Activated CD8-positive, alpha-beta T cell treated with anti-CD3 and anti-CD28 coated beads for 36 hours (primary cell): ENCODE measurements at regions of chr10 and their contacts with region 1.

Region 1: GRCh38 chr10:69515699-69516259 is 57.4 kb downstream of the NEUROG3 start:
- DNase-seq: peak; percentile 89
- ATAC-seq: peak; percentile 97
- H3K4me3 Mint-ChIP-seq: no peak overlapping the region
- H3K27ac Mint-ChIP-seq: no peak overlapping the region
- H3K4me1 Mint-ChIP-seq: no peaks in the 10 kb centered on the region
- H3K27me3 Mint-ChIP-seq: peaks cover 8% of the 10 kb centered on the region
- CTCF ChIP-seq: peak; percentile 79

Region 2: GRCh38 chr10:69449841-69450240 is 65.9 kb before region 1 on chr10:
- CTCF ChIA-PET with region 1: interaction called, 11 read pairs
- POLR2A ChIA-PET with region 1: no interaction called
- intact Hi-C with region 1: no loop called
- DNase-seq: peak; percentile 68
- ATAC-seq: peak; percentile 66
- H3K4me3 Mint-ChIP-seq: no peak overlapping the region
- H3K27ac Mint-ChIP-seq: no peak overlapping the region
- H3K4me1 Mint-ChIP-seq: peaks cover 9% of the 10 kb centered on the region
- H3K27me3 Mint-ChIP-seq: peaks cover 2% of the 10 kb centered on the region
- CTCF ChIP-seq: peak; percentile 51

Region 3: GRCh38 chr10:69527961-69528360 is 12.2 kb after region 1 on chr10:
- CTCF ChIA-PET with region 1: interaction called, 23 read pairs
- POLR2A ChIA-PET with region 1: no interaction called
- intact Hi-C with region 1: no loop called
- DNase-seq: no peak
- ATAC-seq: no peak
- H3K4me3 Mint-ChIP-seq: no peak overlapping the region
- H3K27ac Mint-ChIP-seq: no peak overlapping the region
- H3K4me1 Mint-ChIP-seq: no peaks in the 10 kb centered on the region
- H3K27me3 Mint-ChIP-seq: peaks cover 9% of the 10 kb centered on the region
- CTCF ChIP-seq: no peak

Region 4: DNA sequence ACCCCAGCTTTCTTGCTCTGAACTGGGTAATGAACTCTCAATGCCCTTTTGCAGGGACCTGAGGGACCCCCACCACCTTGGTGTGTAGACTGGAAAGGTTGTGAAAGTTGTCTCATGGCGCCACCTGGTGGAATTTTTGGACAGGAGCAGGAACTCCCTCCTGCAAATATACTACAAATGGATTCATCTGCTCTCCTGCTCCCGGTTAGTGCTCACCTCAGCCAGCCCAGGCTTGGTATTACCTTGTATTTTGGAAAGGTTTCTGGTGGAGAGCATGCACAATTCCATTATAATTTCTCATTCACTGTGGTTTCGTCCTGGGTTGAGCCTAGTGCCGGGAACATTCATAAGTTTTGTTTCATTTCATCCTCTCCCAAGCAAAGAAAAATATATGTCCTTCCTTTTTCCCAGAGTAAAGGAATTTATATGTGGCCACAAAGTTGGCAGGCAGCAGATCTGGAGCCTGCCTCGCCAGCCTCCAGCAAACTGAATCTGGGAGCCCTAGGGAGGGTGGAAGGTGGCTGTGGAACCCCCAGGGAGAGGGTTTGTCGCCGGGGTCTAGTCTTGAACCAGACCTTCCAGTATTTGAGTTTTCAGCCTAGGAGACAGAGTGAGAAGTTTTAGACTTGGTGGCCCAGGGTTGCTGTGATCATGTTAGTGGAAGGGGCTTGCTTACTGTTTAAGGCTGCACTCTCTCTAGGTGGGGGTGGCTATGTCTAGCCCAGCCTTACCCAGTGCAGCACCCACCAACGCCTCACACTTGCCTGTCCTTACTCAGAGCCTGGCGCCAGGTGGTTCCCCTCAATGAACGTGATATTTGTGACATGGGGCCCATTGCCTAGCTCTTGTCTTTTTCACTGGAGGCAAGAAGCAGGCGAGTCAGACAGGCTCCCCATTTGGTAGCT is 123.8 kb after region 1 on chr10:
- CTCF ChIA-PET with region 1: interaction called, 397 read pairs
- POLR2A ChIA-PET with region 1: interaction called, 3 read pairs
- intact Hi-C with region 1: loop called (anchors 1 kb)
- DNase-seq: peak; percentile 80
- ATAC-seq: peak; percentile 75
- H3K4me3 Mint-ChIP-seq: no peak overlapping the region
- H3K27ac Mint-ChIP-seq: no peak overlapping the region
- H3K4me1 Mint-ChIP-seq: no peaks in the 10 kb centered on the region
- H3K27me3 Mint-ChIP-seq: no peaks in the 10 kb centered on the region
- CTCF ChIP-seq: peak; percentile 88

Region 5: DNA sequence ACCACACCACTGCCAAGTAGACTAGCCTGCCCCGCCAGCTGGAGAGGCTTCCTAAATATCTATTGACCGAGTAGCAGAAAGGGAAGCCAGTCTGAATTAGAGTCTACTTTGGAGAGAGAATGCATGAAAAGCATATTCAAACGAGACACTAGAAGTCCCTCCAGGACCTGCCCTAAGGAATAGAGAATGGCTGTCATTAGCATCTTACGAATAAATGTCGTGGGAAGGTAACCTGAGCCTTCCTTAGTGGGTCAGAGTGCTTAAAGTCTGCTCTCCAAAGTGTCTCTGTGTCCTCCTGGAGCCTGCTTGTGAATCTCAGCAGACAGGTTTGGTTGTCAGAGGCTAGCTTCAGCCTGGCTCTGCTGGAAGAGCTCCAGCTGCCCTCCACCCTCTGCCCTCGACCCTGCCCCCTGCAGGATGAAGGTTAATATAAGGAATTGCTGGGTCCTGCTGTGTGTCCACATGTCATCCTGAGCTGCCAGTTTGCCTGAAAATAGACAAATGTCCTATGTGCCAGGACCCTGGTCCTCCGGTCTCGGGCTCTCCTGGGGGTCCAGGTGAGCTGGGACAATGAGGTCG is 147.7 kb after region 1 on chr10:
- CTCF ChIA-PET with region 1: interaction called, 12 read pairs
- POLR2A ChIA-PET with region 1: no interaction called
- intact Hi-C with region 1: no loop called
- DNase-seq: peak; percentile 10
- ATAC-seq: no peak
- H3K4me3 Mint-ChIP-seq: no peak overlapping the region
- H3K27ac Mint-ChIP-seq: no peak overlapping the region
- H3K4me1 Mint-ChIP-seq: no peaks in the 10 kb centered on the region
- H3K27me3 Mint-ChIP-seq: peaks cover 10% of the 10 kb centered on the region
- CTCF ChIP-seq: no peak

Region 6: DNA sequence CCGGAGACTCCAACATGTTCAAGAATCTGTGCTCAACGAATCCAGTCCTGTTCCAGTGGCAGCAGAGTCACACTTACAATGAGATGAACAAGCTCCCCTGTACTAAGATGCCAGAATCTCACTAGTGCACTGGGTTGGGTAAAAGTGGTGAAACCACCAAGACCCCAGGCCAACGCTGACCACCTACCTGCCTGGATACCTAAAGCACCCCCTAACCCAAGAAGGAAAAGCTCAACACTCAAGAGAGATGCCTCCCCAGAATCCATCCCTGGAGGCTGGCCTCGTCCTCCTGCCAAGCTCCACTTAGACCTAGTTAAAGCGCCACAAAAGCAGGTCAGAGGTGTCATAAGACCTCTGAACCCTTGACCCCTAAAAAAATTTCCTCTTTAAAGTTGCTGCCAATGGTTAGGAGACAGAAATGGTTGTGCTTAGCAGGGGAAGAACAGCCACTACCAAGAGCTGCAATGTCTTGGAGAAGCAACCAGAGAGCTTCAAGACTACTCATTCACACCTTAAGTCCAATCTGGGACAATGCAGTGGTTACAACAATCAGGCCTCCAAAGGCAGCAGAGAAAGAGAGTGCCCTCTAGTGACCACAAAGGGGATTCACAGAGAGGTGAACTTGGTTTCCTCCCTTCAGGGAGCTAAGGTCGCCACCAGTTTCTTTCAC is 442.2 kb after region 1 on chr10:
- CTCF ChIA-PET with region 1: interaction called, 11 read pairs
- POLR2A ChIA-PET with region 1: no interaction called
- intact Hi-C with region 1: no loop called
- DNase-seq: peak; percentile 37
- ATAC-seq: peak; percentile 86
- H3K4me3 Mint-ChIP-seq: no peak overlapping the region
- H3K27ac Mint-ChIP-seq: no peak overlapping the region
- H3K4me1 Mint-ChIP-seq: no peaks in the 10 kb centered on the region
- H3K27me3 Mint-ChIP-seq: peaks cover 2% of the 10 kb centered on the region
- CTCF ChIP-seq: peak; percentile 78